ENCODE measurements at regions of chr19 and their contacts with region 1.

Region 1: GRCh38 chr19:56333505-56333904 is 18.9 kb upstream of the ZSCAN5A start:
- DNase-seq: no peak
- ATAC-seq: peak; percentile 86
- H3K4me3 ChIP-seq: no peak overlapping the region
- H3K27ac ChIP-seq: no peak overlapping the region
- H3K4me1 ChIP-seq: no peaks in the 10 kb centered on the region
- H3K27me3 ChIP-seq: no peaks in the 10 kb centered on the region
- CTCF ChIP-seq: peak; percentile 65 to 81 (median 69); a peak in 5 of 6 replicates
- EP300 ChIP-seq: no peak
- POLR2A ChIP-seq: no peak
- RAD21 ChIP-seq: peak; percentile 94

Region 2: GRCh38 chr19:55674841-55675660 is 658.5 kb before region 1 on chr19 and contains the start of gene EPN1:
- CTCF ChIA-PET with region 1: no interaction called
- POLR2A ChIA-PET with region 1: no interaction called
- RAD21 ChIA-PET with region 1: no interaction called
- SMC1A ChIA-PET with region 1: no interaction called
- in situ Hi-C with region 1: no loop called
- intact Hi-C with region 1: loop called (anchors 5 kb)
- DNase-seq: peak; percentile 74
- ATAC-seq: peak; percentile 64
- H3K4me3 ChIP-seq: peak within 1 kb of the TSS; percentile 92
- H3K27ac ChIP-seq: peak within 1 kb of the TSS; percentile 94
- H3K4me1 ChIP-seq: peaks cover 23% of the 10 kb centered on the region
- H3K27me3 ChIP-seq: no peaks in the 10 kb centered on the region
- CTCF ChIP-seq: no peak
- EP300 ChIP-seq: no peak
- POLR2A ChIP-seq: peak; percentile 72
- RAD21 ChIP-seq: no peak
- polyA plus RNA-seq, gene EPN1: 0.11 to 0.16 TPM

Region 3: DNA sequence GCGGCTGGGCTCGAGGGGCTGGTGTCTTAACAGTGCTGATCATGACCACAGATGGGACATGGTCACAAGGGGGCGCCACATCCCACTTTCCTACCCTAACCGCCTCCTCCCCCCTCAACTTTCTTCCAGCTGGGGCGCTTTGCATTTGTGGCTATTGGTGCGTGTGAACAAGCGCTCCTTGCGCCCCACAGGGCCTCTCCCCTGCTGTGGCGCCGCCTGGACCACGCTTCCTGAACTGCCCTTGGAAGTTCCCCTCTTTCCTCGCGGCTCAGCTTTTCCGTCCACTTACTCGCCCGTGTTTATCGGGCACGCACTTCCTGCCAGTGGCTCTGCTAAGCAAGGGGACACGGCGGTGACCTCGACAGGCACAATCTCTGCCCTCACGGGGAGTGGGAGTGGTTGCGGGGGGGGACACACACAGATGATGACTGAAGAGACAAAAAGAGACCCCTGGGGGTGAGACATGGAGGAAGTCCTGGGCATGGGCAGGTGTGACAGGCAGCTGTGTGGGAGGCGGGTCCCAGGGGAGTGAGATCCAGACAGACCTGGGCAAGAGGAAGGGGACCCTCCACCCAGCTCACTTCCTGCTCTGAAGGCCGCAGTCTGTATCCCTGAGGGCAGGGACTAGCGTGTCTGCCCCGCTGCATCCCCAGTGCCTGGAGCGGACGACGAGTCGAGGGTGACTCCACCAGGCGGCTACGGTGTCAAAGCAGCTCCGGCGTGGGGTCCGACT is 252.7 kb before region 1 on chr19:
- CTCF ChIA-PET with region 1: interaction called, 39 read pairs
- POLR2A ChIA-PET with region 1: no interaction called
- RAD21 ChIA-PET with region 1: interaction called, 17 read pairs
- SMC1A ChIA-PET with region 1: interaction called, 8 read pairs
- in situ Hi-C with region 1: no loop called
- intact Hi-C with region 1: no loop called
- DNase-seq: peak; percentile 38
- ATAC-seq: peak; percentile 89
- H3K4me3 ChIP-seq: peak overlapping the region; percentile 61; the same call in 1 of the 2 replicates
- H3K27ac ChIP-seq: peak overlapping the region; percentile 3; the same call in 1 of the 2 replicates
- H3K4me1 ChIP-seq: peaks cover 5% of the 10 kb centered on the region; the same call in 1 of the 2 replicates
- H3K27me3 ChIP-seq: no peaks in the 10 kb centered on the region
- CTCF ChIP-seq: peak; percentile 64 to 69 (median 64)
- EP300 ChIP-seq: peak; percentile 57 to 58; a peak in 1 of 4 replicates
- POLR2A ChIP-seq: peak; percentile 62; the same call in 1 of the 2 replicates
- RAD21 ChIP-seq: peak; percentile 60

Region 4: DNA sequence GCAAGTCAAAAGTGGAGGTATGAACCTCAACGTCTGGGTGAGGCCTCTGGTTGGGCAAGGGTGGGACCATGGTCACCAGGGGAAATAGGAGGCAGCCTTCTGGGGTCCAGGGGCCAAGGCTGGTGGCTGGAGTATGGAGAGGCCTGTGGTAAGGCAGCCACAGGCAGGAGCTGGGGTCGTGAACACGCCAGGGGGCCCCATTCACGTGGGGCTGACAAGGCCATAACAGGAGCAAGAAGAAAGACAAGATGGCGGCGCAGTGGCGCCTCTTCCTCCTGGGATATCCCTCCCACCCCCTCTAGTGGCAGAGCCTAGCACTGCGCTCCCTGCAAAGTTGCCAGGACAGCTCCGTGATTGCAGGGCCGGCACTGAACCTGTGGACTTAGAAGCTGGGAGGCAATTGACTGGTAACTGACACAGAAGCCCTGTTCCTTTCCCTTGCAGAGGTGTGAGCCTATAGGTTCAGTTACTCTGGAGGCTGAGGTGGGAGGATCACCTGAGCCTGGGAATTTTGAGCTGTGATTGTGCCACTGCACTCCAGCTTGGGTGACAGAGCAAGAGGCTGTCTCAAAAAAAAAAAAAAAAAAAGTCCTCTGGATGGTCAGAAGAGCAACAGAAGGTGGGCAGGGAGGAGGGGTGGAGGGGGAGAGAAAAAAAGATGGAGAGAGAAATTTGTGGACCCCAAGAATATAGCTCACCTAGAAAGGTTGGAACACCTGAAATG is 80.6 kb before region 1 on chr19:
- CTCF ChIA-PET with region 1: interaction called, 185 read pairs
- POLR2A ChIA-PET with region 1: no interaction called
- RAD21 ChIA-PET with region 1: interaction called, 106 read pairs
- SMC1A ChIA-PET with region 1: interaction called, 82 read pairs
- in situ Hi-C with region 1: loop called (anchors 5 kb)
- intact Hi-C with region 1: loop called (anchors 1 kb)
- DNase-seq: no peak
- ATAC-seq: peak; percentile 84
- H3K4me3 ChIP-seq: no peak overlapping the region
- H3K27ac ChIP-seq: no peak overlapping the region
- H3K4me1 ChIP-seq: no peaks in the 10 kb centered on the region
- H3K27me3 ChIP-seq: no peaks in the 10 kb centered on the region
- CTCF ChIP-seq: peak; percentile 61 to 86 (median 78)
- EP300 ChIP-seq: no peak
- POLR2A ChIP-seq: no peak
- RAD21 ChIP-seq: peak; percentile 56

Region 5: DNA sequence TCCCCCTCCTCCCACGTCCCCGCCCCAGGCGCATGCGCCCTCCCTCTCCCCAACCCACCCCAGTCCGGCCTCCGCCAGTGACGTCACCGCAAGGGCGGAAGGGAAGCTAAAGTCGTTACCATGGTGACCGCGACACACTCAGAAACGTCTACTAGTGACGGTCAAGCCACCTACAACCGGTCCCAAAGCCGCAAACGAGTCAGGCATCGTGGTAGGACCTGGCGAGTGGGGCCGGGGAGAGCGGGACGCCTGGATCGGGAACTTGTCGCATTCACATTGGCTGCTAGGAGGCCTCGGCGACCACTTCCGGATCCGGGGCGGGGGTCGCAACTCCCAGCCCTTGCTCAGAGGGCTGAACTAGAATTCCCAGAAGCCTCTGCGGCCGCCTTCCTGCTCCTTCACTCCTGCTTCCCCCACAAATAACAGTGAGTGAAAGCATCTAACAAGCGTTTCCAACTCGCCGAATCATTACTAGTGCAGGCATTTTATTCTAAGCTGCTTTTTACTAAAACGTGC is 18.9 kb before region 1 on chr19 and contains the start of gene ZSCAN5A:
- CTCF ChIA-PET with region 1: interaction called, 88 read pairs
- POLR2A ChIA-PET with region 1: no interaction called
- RAD21 ChIA-PET with region 1: interaction called, 16 read pairs
- SMC1A ChIA-PET with region 1: interaction called, 10 read pairs
- in situ Hi-C with region 1: no loop called
- intact Hi-C with region 1: no loop called
- DNase-seq: peak; percentile 89
- ATAC-seq: peak; percentile 87
- H3K4me3 ChIP-seq: peak within 1 kb of the TSS; percentile 92
- H3K27ac ChIP-seq: peak within 1 kb of the TSS; percentile 98
- H3K4me1 ChIP-seq: peaks cover 3% of the 10 kb centered on the region
- H3K27me3 ChIP-seq: no peaks in the 10 kb centered on the region
- CTCF ChIP-seq: no peak
- EP300 ChIP-seq: no peak
- POLR2A ChIP-seq: peak; percentile 90
- RAD21 ChIP-seq: no peak
- polyA plus RNA-seq, gene ZSCAN5A: 5.5 to 6.6 TPM

Region 6: DNA sequence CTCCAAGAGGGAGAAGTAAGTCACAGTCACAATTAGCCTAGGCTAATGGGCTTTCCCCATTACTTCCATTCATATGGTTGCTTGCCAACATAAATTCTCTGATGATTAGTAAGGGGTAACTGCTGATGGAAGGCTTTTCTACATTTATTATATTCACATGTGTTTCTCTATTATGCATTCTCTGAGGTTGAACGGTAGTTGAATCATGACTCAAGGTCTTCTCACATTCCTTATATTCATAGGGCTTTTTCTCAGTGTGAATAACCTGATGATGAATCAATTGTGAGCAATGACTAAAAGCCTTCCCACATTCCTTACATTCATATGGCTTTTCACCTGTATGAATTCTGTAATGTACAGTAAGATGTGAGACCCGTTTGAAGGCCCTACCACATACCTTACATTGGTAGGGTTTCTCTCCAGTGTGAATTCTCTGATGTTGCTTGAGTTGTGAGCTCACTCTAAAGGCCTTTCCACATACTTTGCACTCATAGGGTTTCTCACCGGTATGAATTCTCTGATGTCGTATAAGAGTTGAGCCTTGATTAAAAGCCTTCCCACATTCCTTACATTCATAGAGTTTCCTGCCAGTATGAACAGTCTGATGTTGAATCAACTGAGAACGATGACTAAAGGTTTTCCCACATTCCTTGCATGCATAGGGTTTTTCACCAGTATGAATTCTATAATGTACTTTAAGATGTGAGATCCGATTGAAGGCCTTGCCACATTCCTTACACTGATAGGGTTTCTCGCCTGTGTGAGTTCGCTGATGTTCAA is 50.5 kb after region 1 on chr19:
- CTCF ChIA-PET with region 1: no interaction called
- POLR2A ChIA-PET with region 1: no interaction called
- RAD21 ChIA-PET with region 1: no interaction called
- SMC1A ChIA-PET with region 1: no interaction called
- in situ Hi-C with region 1: no loop called
- intact Hi-C with region 1: no loop called
- DNase-seq: no peak
- ATAC-seq: no peak
- H3K4me3 ChIP-seq: no peak overlapping the region
- H3K27ac ChIP-seq: no peak overlapping the region
- H3K4me1 ChIP-seq: no peaks in the 10 kb centered on the region
- H3K27me3 ChIP-seq: no peaks in the 10 kb centered on the region
- CTCF ChIP-seq: no peak
- EP300 ChIP-seq: no peak
- POLR2A ChIP-seq: no peak
- RAD21 ChIP-seq: no peak

Region 7: DNA sequence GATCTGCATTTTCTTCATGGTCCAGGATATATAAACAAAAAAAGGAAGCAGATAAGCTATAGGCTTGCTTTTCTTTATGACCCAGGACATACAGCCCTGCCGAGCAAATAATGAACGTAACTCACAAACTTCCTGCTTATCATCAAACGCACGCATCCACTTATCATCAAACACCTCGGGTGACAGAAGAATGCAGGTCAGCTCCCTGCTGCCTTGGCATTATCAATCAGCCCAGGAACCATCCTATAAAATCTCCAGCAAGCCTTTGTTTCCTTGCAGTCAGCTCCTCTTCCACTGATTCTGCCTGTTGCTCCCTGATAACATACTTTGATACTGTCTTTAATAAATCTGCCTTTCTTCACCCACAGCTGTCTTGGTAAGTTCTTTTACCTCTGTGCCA is 65.3 kb after region 1 on chr19:
- CTCF ChIA-PET with region 1: no interaction called
- POLR2A ChIA-PET with region 1: no interaction called
- RAD21 ChIA-PET with region 1: no interaction called
- SMC1A ChIA-PET with region 1: no interaction called
- in situ Hi-C with region 1: no loop called
- intact Hi-C with region 1: no loop called
- DNase-seq: no peak
- ATAC-seq: no peak
- H3K4me3 ChIP-seq: no peak overlapping the region
- H3K27ac ChIP-seq: no peak overlapping the region
- H3K4me1 ChIP-seq: no peaks in the 10 kb centered on the region
- H3K27me3 ChIP-seq: no peaks in the 10 kb centered on the region
- CTCF ChIP-seq: no peak
- EP300 ChIP-seq: no peak
- POLR2A ChIP-seq: no peak
- RAD21 ChIP-seq: no peak

Region 8: GRCh38 chr19:56441206-56441792 is 107.8 kb after region 1 on chr19:
- CTCF ChIA-PET with region 1: no interaction called
- POLR2A ChIA-PET with region 1: no interaction called
- RAD21 ChIA-PET with region 1: no interaction called
- SMC1A ChIA-PET with region 1: no interaction called
- in situ Hi-C with region 1: no loop called
- intact Hi-C with region 1: no loop called
- DNase-seq: no peak
- ATAC-seq: no peak
- H3K4me3 ChIP-seq: no peak overlapping the region
- H3K27ac ChIP-seq: no peak overlapping the region
- H3K4me1 ChIP-seq: no peaks in the 10 kb centered on the region
- H3K27me3 ChIP-seq: no peaks in the 10 kb centered on the region
- CTCF ChIP-seq: no peak
- EP300 ChIP-seq: no peak
- POLR2A ChIP-seq: no peak
- RAD21 ChIP-seq: no peak

Region 9: DNA sequence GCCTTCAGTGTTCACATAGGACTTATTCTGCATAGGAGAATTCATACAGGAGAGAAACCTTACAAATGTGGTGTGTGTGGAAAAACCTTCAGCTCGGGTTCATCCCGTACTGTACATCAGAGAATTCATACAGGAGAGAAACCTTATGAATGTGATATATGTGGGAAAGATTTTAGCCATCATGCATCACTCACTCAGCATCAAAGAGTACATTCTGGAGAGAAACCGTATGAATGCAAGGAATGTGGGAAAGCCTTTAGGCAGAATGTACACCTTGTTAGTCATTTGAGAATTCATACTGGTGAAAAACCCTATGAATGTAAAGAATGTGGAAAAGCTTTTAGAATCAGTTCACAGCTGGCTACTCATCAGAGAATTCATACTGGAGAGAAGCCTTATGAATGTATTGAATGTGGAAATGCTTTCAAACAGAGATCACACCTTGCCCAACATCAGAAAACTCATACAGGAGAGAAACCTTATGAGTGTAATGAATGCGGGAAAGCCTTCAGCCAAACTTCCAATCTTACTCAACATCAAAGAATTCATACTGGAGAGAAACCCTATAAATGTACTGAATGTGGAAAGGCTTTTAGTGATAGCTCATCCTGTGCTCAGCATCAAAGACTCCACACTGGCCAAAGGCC is 191.8 kb after region 1 on chr19:
- CTCF ChIA-PET with region 1: no interaction called
- POLR2A ChIA-PET with region 1: no interaction called
- RAD21 ChIA-PET with region 1: no interaction called
- SMC1A ChIA-PET with region 1: no interaction called
- in situ Hi-C with region 1: no loop called
- intact Hi-C with region 1: no loop called
- DNase-seq: no peak
- ATAC-seq: no peak
- H3K4me3 ChIP-seq: no peak overlapping the region
- H3K27ac ChIP-seq: no peak overlapping the region
- H3K4me1 ChIP-seq: no peaks in the 10 kb centered on the region
- H3K27me3 ChIP-seq: no peaks in the 10 kb centered on the region
- CTCF ChIP-seq: no peak
- EP300 ChIP-seq: no peak
- POLR2A ChIP-seq: no peak
- RAD21 ChIP-seq: no peak